Gastrocnemius medialis (tissue), 4 donors: ENCODE measurements at regions of chr5 and their contacts with region 1.

Region 1: GRCh38 chr5:43120720-43121564 is at the start of gene ZNF131:
- DNase-seq: peak; percentile 93 to 94
- ATAC-seq: peak; percentile 83 to 86
- H3K4me3 ChIP-seq: peak within 1 kb of the TSS; percentile 86 to 94 (median 92)
- H3K27ac ChIP-seq: peak within 1 kb of the TSS; percentile 94 to 98 (median 96)
- H3K4me1 ChIP-seq: peaks cover 35 to 50% of the 10 kb centered on the region in 2 donors
- H3K27me3 ChIP-seq: no peaks in the 10 kb centered on the region
- CTCF ChIP-seq: peak in 1 of 5 experiments; percentile 19
- POLR2A ChIP-seq: peak in 1 of 2 donors; percentile 86
- total RNA-seq, gene ZNF131: 16.4 to 44.6 (median 18.7) TPM

Region 2: GRCh38 chr5:42811591-42812446 is 309.1 kb before region 1 on chr5 and contains the start of gene SELENOP:
- in situ Hi-C with region 1: no loop called
- intact Hi-C with region 1: loop called (anchors 5 kb)
- DNase-seq: peak; percentile 72 to 74
- ATAC-seq: peak; percentile 96 to 97
- H3K4me3 ChIP-seq: peak within 1 kb of the TSS; percentile 56 to 76 (median 64)
- H3K27ac ChIP-seq: peak within 1 kb of the TSS; percentile 81 to 91 (median 86)
- H3K4me1 ChIP-seq: peaks cover 27 to 30% of the 10 kb centered on the region in 2 donors
- H3K27me3 ChIP-seq: no peaks in the 10 kb centered on the region
- CTCF ChIP-seq: no peak
- POLR2A ChIP-seq: peak; percentile 90 to 95
- total RNA-seq, gene SELENOP: 231 to 290 (median 243) TPM

Region 3: DNA sequence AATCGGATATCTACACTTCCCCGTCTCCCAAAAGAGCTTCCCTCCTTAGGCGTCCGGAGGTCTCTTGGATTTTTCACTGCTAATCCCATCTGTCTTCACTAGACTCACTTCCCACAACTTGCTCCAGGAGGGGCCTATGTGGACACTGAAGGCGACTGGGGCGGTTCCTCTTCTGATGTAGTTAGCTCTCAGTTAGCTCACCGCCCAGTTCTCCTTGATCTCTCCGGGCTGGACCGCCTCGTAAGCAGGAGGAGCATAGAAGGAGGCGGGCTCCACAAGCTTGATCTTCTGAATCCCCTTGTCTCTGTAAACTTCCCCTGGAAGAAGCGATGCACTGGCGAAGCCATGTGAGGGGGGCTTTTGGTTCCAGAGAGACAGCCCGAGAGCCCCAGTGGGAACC is 197.2 kb before region 1 on chr5:
- in situ Hi-C with region 1: no loop called
- intact Hi-C with region 1: no loop called
- DNase-seq: no peak
- ATAC-seq: no peak
- H3K4me3 ChIP-seq: no peak overlapping the region
- H3K27ac ChIP-seq: no peak overlapping the region
- H3K4me1 ChIP-seq: no peaks in the 10 kb centered on the region
- H3K27me3 ChIP-seq: peaks cover 0 to 7% (median 6%) of the 10 kb centered on the region in 3 donors
- CTCF ChIP-seq: no peak
- POLR2A ChIP-seq: no peak

Region 4: GRCh38 chr5:42950440-42951292 is 170.3 kb before region 1 on chr5:
- in situ Hi-C with region 1: no loop called
- intact Hi-C with region 1: loop called (anchors 2 kb)
- DNase-seq: peak; percentile 46 to 58
- ATAC-seq: peak; percentile 80 to 90
- H3K4me3 ChIP-seq: peak overlapping the region; percentile 60 to 74 (median 65)
- H3K27ac ChIP-seq: peak overlapping the region; percentile 80 to 84 (median 83)
- H3K4me1 ChIP-seq: peaks cover 22 to 33% of the 10 kb centered on the region in 2 donors
- H3K27me3 ChIP-seq: peaks cover 69 to 81% (median 69%) of the 10 kb centered on the region in 3 donors
- CTCF ChIP-seq: no peak
- POLR2A ChIP-seq: peak in 1 of 2 donors; percentile 44

Region 5: GRCh38 chr5:43008369-43009153 is 112.4 kb before region 1 on chr5:
- in situ Hi-C with region 1: no loop called
- intact Hi-C with region 1: loop called (anchors 5 kb)
- DNase-seq: peak; percentile 72 to 85
- ATAC-seq: peak; percentile 79 to 81
- H3K4me3 ChIP-seq: peak overlapping the region; percentile 49 to 70 (median 68)
- H3K27ac ChIP-seq: peak overlapping the region; percentile 71 to 91 (median 87)
- H3K4me1 ChIP-seq: peaks cover 0 to 8% of the 10 kb centered on the region in 2 donors
- H3K27me3 ChIP-seq: peaks cover 0 to 33% (median 6%) of the 10 kb centered on the region in 3 donors
- CTCF ChIP-seq: peak in 1 of 5 experiments; percentile 8
- POLR2A ChIP-seq: peak; percentile 64 to 74

Region 6: DNA sequence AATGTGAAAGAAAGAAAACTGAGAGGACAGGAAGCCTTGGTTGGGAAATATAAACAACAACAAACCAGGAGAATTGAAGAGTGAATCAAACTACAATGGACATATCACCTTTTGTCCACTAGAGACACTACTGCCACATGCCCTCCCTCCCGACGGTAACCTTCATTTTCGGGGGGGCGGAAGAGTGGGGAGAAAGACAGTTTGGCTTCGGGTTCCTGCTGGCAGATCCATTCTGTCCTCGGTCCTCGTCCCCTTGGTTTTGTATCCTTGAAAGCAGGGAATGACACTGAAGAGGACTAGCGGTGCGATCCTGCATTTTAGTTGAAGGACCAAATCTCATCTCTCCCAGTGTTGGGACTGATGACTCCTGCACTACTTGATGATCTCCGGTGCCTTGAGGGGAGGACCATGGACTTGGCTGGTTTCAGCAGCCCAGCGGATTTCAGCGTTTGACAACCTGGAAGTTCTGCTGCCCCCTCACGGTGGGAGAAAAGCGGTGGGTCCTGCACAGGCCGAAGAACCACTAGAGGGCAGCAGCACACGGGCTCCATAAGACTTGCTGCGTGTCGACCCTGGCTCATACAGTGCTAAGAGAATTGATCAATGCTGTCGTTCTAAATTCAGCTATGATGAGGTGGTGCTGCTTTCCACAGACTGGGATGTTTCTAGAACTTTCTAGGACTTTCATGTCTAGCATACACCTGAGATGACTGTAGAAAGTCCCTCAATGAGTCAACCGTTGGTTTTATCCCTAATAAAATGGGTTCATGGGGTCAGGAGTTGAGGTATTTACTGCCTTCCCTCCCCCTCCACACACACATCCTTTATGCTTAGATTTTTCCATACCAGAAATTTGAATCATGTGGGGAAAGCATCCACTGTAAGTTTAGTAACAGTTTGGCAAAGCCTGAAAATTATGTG is 15.3 kb before region 1 on chr5:
- in situ Hi-C with region 1: no loop called
- intact Hi-C with region 1: loop called (anchors 1 kb)
- DNase-seq: peak; percentile 78 to 86
- ATAC-seq: peak; percentile 97 to 98
- H3K4me3 ChIP-seq: peak overlapping the region; percentile 50 to 77 (median 61)
- H3K27ac ChIP-seq: peak overlapping the region; percentile 71 to 85 (median 79)
- H3K4me1 ChIP-seq: peaks cover 3 to 4% of the 10 kb centered on the region in 2 donors
- H3K27me3 ChIP-seq: no peaks in the 10 kb centered on the region
- CTCF ChIP-seq: peak; percentile 94 to 100 (median 97)
- POLR2A ChIP-seq: no peak

Region 7: GRCh38 chr5:43191740-43192557 is 71.0 kb after region 1 on chr5 and contains the start of gene NIM1K:
- in situ Hi-C with region 1: no loop called
- intact Hi-C with region 1: loop called (anchors 5 kb)
- DNase-seq: peak; percentile 19 to 23
- ATAC-seq: peak; percentile 66 to 68
- H3K4me3 ChIP-seq: peak within 1 kb of the TSS; percentile 62 to 75 (median 70)
- H3K27ac ChIP-seq: peak within 1 kb of the TSS; percentile 14 to 68 (median 42)
- H3K4me1 ChIP-seq: peaks cover 0 to 25% of the 10 kb centered on the region in 2 donors
- H3K27me3 ChIP-seq: no peaks in the 10 kb centered on the region
- CTCF ChIP-seq: no peak
- POLR2A ChIP-seq: no peak
- total RNA-seq, gene NIM1K: 0.41 TPM in 1 of 4 donors, not detected in the others

Region 8: GRCh38 chr5:43313035-43313853 is 192.3 kb after region 1 on chr5 and contains the start of gene HMGCS1:
- in situ Hi-C with region 1: loop called in 2 of 4 experiments (anchors 25 kb)
- intact Hi-C with region 1: loop called (anchors 5 kb)
- DNase-seq: peak; percentile 98 to 99
- ATAC-seq: peak; percentile 99
- H3K4me3 ChIP-seq: peak within 1 kb of the TSS; percentile 77 to 93 (median 83)
- H3K27ac ChIP-seq: peak within 1 kb of the TSS; percentile 89 to 94 (median 90)
- H3K4me1 ChIP-seq: peaks cover 18 to 28% of the 10 kb centered on the region in 2 donors
- H3K27me3 ChIP-seq: no peaks in the 10 kb centered on the region
- CTCF ChIP-seq: peak in 1 of 5 experiments; percentile 14
- POLR2A ChIP-seq: peak; percentile 87 to 96
- total RNA-seq, gene HMGCS1: 6.1 to 15.0 (median 8.2) TPM

Region 9: DNA sequence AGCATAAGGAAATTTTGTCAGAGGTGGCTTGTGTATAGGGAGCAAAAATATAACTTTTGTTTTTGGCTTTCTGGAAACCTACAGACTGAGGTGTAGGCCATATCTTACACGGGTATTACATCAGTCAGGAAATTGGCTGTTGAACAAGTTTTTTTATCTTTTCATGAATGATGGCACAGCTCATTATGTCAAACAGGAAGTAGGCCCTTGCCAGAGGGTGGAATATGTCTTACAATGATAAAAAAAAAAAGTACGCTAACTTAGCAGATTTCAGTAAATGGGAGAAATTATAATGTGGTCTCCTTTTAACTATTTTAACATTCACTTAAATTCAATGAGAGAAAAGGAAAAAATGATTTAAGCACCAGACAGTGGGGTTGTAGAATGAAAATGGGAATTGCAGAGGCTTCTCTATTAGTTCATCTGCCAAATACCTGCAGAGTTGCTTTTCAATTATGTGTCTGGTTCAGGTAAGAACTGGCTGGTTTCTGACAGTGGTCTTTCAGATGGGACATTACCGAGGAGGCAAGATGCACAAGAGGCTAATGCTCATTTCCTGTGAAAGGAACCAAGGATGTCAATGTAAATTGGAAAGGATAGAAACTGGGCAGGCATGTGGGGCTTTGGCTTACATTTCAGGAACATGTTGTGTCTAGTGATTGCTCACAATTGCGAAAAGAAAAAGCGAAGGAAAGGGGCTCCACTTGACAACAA is 652.0 kb after region 1 on chr5:
- in situ Hi-C with region 1: no loop called
- intact Hi-C with region 1: no loop called
- DNase-seq: no peak
- ATAC-seq: no peak
- H3K4me3 ChIP-seq: no peak overlapping the region
- H3K27ac ChIP-seq: no peak overlapping the region
- H3K4me1 ChIP-seq: no peaks in the 10 kb centered on the region
- H3K27me3 ChIP-seq: no peaks in the 10 kb centered on the region
- CTCF ChIP-seq: no peak
- POLR2A ChIP-seq: no peak